Activated naive CD4-positive, alpha-beta T cell treated with anti-CD3 and anti-CD28 coated beads for 36 hours (primary cell): ENCODE measurements at regions of chr2 and their contacts with region 1.

Region 1: DNA sequence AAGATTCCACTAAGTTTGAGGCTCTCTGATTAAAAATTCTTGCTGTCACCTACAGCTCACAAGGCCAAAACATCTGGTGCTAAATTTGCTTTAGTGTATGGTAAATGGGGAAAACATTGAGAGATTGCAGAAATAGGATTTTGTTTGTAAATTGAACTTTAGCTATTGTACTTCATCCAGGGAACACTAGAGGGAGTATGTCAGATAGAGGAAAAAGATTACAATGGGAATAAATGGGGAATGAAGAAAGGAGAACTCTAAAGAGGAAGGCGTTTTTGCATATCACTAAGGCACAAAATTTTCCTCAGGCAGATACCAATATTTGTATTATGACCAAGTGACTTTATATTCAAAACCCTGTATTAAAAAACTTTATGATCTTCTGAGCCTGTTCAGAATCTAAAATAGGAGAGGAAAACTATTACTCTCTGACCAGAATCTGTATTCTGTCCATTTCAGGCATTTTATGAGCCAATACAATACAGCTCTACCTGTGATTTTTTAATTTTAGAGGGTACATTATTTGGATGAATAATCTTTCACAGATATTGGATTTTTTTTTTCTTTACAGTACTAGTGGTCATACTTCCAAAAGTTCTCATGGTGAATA is 52.3 kb upstream of the ITGB6 start:
- DNase-seq: no peak
- H3K4me3 Mint-ChIP-seq: no peak overlapping the region
- H3K27ac Mint-ChIP-seq: no peak overlapping the region
- H3K4me1 Mint-ChIP-seq: no peaks in the 10 kb centered on the region
- H3K27me3 Mint-ChIP-seq: peaks cover 6% of the 10 kb centered on the region

Region 2: GRCh38 chr2:160145471-160145870 is 106.9 kb before region 1 on chr2:
- CTCF ChIA-PET with region 1: no interaction called
- intact Hi-C with region 1: no loop called
- DNase-seq: no peak
- H3K4me3 Mint-ChIP-seq: no peak overlapping the region
- H3K27ac Mint-ChIP-seq: no peak overlapping the region
- H3K4me1 Mint-ChIP-seq: no peaks in the 10 kb centered on the region
- H3K27me3 Mint-ChIP-seq: peaks cover 4% of the 10 kb centered on the region

Region 3: DNA sequence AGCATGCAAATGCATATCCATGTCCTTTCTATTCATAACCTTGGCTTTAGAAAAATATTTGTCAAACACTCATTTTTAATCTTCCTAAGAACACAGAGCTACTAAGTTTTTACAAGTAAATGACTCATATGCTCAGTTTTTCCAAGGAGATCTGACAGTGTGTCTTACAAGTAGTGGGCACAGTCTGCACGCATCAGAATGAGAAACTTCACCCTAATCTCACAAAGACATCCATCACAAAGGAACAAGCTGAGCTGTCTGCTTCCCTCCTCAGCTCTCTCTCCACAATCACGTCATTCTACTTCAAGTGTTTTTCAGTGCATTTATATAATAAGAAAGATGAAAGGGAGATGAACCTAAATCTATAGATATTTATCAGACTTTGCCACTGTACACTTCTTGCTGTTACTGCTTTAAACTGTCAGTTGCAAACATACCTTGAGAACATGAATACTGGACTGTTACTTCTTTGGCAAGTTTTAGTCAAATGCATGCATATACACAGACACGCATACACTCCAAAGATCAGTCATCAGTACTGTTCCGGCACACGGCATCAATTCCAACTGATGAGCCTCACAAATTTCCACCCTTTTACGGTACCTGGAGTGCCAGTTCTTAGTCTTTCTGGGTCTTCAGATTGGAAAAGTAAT is 165.5 kb after region 1 on chr2:
- CTCF ChIA-PET with region 1: no interaction called
- intact Hi-C with region 1: no loop called
- DNase-seq: peak; percentile 51
- H3K4me3 Mint-ChIP-seq: no peak overlapping the region
- H3K27ac Mint-ChIP-seq: peak overlapping the region; percentile 20
- H3K4me1 Mint-ChIP-seq: peaks cover 65% of the 10 kb centered on the region
- H3K27me3 Mint-ChIP-seq: no peaks in the 10 kb centered on the region

Region 4: DNA sequence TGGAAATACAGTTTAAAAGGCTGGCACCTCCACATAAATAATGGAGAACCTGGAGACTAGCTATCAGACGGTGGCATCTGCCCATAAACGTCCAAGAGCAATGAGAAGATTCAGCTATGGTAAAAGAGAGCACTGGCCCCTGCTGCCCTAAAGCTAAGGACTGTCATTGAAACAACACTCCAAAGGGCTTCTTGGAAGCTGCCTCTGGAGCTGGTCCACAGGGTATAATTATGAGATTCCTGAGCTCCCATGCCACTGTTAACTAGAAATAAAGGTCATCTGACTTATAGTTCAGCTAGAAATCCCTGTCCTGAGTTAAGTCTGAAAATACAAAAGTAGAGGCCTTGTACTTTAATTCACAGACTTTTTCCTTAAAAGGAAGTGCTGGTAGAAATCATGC is 281.1 kb after region 1 on chr2:
- CTCF ChIA-PET with region 1: no interaction called
- intact Hi-C with region 1: no loop called
- DNase-seq: no peak
- H3K4me3 Mint-ChIP-seq: no peak overlapping the region
- H3K27ac Mint-ChIP-seq: no peak overlapping the region
- H3K4me1 Mint-ChIP-seq: no peaks in the 10 kb centered on the region
- H3K27me3 Mint-ChIP-seq: no peaks in the 10 kb centered on the region

Region 5: GRCh38 chr2:160970052-160970965 is 717.9 kb after region 1 on chr2:
- CTCF ChIA-PET with region 1: interaction called, 12 read pairs
- intact Hi-C with region 1: loop called (anchors 1 kb)
- DNase-seq: peak; percentile 29
- H3K4me3 Mint-ChIP-seq: no peak overlapping the region
- H3K27ac Mint-ChIP-seq: no peak overlapping the region
- H3K4me1 Mint-ChIP-seq: peaks cover 8% of the 10 kb centered on the region
- H3K27me3 Mint-ChIP-seq: no peaks in the 10 kb centered on the region